ENCODE measurements at regions of chr2 and their contacts with region 1.

Region 1: DNA sequence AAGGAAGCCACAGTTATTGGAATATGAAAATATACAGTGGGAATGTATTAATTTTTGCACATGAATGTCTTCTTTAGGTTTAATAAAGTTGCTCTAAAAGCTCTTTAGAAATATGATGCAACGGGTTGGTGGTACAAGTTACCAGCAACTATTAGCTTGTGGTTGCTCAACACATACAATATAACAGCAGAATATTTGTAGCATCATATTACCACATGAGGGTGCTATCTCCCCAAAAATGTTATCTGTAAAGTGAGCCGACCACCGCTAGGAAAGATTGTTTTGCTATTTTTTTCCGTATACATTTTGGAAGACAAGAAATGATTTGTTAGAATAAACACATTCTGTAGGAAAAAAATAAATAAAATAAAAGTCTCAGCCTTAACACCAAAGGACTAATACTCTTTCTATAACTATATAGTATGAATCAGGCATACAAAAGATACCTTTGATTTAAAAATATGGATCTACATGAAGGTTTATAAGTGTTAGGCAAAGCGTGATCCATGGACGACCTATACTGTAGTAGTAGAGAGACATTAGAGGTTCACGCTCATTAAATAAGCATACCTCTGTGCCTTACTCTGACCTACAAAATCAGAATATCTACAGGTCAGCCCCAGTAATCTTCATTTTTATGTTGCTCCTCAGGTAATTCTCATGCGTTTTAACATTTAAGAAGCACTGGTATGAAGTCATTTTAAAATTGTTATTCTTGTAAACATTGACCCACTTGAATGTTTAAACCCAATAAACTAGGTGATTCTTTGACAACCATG is 1110.6 kb upstream of the ACVR2A start:
- DNase-seq: no peak
- H3K4me3 ChIP-seq: no peak overlapping the region
- H3K27ac ChIP-seq: no peak overlapping the region
- H3K4me1 ChIP-seq: no peaks in the 10 kb centered on the region
- H3K27me3 ChIP-seq: no peaks in the 10 kb centered on the region
- CTCF ChIP-seq: peak in 3 of 4 experiments; percentile 44 to 68 (median 55)
- POLR2A ChIP-seq: no peak

Region 2: DNA sequence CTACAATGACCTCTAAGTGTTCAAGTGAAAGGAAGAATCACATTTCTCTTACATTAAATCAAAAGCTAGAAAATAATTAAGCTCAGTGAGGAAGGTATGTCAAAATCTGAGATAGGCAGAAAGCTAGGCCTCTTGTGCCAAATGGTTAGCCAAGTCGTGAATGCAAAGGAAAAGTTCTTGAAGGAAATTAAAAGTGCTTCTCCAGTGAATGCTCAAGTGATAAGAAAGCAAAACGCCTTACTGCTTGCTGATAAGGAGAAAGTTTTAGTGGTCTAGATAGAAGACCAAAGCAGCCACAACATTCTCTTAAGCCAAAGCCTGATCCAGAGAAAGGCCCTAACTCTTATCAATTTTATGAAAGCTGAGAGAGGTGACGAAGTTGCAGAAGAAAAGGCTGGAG is 178.3 kb after region 1 on chr2:
- intact Hi-C with region 1: no loop called
- DNase-seq: no peak
- H3K4me3 ChIP-seq: no peak overlapping the region
- H3K27ac ChIP-seq: no peak overlapping the region
- H3K4me1 ChIP-seq: no peaks in the 10 kb centered on the region
- H3K27me3 ChIP-seq: no peaks in the 10 kb centered on the region
- CTCF ChIP-seq: no peak
- POLR2A ChIP-seq: no peak

Region 3: GRCh38 chr2:146927080-146927711 is 193.0 kb after region 1 on chr2:
- intact Hi-C with region 1: loop called (anchors 10 kb)
- DNase-seq: peak; percentile 39
- H3K4me3 ChIP-seq: no peak overlapping the region
- H3K27ac ChIP-seq: no peak overlapping the region
- H3K4me1 ChIP-seq: no peaks in the 10 kb centered on the region
- H3K27me3 ChIP-seq: no peaks in the 10 kb centered on the region
- CTCF ChIP-seq: peak in 3 of 4 experiments; percentile 19 to 48 (median 47)
- POLR2A ChIP-seq: no peak

Region 4: GRCh38 chr2:147045113-147045512 is 310.9 kb after region 1 on chr2:
- intact Hi-C with region 1: loop called (anchors 10 kb)
- DNase-seq: no peak
- H3K4me3 ChIP-seq: no peak overlapping the region
- H3K27ac ChIP-seq: no peak overlapping the region
- H3K4me1 ChIP-seq: no peaks in the 10 kb centered on the region
- H3K27me3 ChIP-seq: no peaks in the 10 kb centered on the region
- CTCF ChIP-seq: peak in 3 of 4 experiments; percentile 34 to 48 (median 44)
- POLR2A ChIP-seq: no peak

Measured in prostate gland (tissue), 2 donors.